Activated CD4-positive, alpha-beta T cell treated with anti-CD3 and anti-CD28 coated beads, Interleukin-2, amount 10 ng/mL, durations not matched to agents 24 days and 14 days (primary cell): ENCODE measurements at regions of chr14 and their contacts with region 1.

Region 1: GRCh38 chr14:93103392-93104080 is 12.2 kb downstream of the ITPK1 start:
- DNase-seq: peak; percentile 95
- H3K4me3 Mint-ChIP-seq: peak overlapping the region; percentile 85
- H3K27ac Mint-ChIP-seq: peak overlapping the region; percentile 92
- H3K4me1 Mint-ChIP-seq: peaks cover 43% of the 10 kb centered on the region
- H3K27me3 Mint-ChIP-seq: no peaks in the 10 kb centered on the region

Region 2: DNA sequence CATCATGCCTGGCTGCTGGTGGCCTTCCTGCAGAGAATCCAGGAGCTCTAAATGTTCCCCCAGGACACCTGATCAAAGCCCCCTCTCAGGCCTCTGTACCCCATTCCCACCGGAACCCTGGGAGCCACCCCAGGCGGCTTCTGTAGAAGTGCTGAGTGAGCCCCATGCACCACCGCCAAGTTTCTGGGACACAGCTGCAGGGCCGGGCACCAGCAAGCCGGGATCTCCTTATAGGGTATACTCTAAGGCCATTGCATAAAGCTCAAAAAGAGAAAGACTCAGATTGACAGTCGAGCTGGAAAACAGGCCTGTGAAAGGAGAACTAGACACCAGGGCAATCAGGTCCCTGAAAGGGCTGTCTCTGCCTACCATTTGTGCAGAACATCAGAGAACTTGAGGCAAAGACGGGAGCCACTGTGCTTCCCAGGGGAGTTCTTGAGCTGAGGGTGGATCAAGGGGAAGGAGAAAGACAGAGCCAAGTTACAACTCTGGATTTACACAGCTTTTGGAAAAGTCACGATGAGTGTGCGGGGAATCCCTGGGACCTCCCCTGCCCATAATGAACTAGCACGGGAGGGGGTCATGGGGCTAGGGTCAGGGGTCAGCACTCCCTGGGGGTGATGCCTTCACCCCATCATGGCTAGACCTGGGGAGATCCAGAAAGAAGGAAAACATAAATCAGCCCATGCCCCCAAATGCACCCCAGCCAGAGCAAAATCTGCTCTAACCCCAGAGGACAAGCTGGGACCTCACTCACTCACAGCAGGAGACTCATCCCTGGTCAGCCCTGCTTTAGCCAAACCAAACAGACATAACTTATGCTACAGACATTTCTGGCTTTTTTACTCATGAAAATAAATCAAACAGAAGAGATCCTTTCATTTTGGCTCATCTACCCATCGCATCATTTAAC is 38.9 kb before region 1 on chr14:
- intact Hi-C with region 1: loop called (anchors 5 kb)
- DNase-seq: no peak
- H3K4me3 Mint-ChIP-seq: peak overlapping the region; percentile 31
- H3K27ac Mint-ChIP-seq: peak overlapping the region; percentile 92
- H3K4me1 Mint-ChIP-seq: peaks cover 45% of the 10 kb centered on the region
- H3K27me3 Mint-ChIP-seq: no peaks in the 10 kb centered on the region